BJ (cell line): ENCODE measurements at regions of chr19 and their contacts with region 1.

Region 1: DNA sequence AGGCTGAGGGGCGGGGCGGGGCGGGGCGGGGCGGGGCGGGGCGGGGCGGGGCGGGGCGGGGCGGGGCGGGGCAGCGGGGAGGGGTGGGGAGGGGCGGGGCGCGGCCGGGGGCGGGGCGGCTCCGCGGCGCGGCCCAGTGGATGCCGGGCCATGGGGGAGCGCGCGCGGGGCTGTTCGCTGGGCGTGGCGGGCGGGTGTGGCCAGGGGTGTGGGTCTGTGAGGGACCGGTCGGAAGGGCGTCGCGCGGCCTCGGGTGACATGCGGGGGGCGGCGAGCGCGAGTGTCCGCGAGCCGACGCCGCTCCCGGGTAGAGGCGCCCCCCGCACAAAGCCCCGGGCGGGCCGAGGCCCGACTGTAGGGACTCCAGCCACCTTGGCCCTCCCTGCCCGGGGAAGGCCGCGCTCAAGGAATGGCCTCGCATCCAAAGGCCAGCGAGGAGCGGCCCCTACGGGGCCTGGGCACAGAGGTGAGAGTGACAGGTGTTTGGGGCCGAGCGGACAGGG is at the start of gene ZFP28:
- DNase-seq: no peak
- H3K4me3 ChIP-seq: peak within 1 kb of the TSS; percentile 86
- H3K27me3 ChIP-seq: no peaks in the 10 kb centered on the region
- CTCF ChIP-seq: no peak
- polyA plus RNA-seq, gene ZFP28: 2.6 and 4.9 TPM in 2 replicates

Region 2: GRCh38 chr19:56477429-56478338 is 61.1 kb before region 1 on chr19:
- CTCF ChIA-PET with region 1: no interaction called
- POLR2A ChIA-PET with region 1: interaction called, 15 read pairs
- DNase-seq: peak; percentile 63
- H3K4me3 ChIP-seq: peak overlapping the region; percentile 82
- H3K27me3 ChIP-seq: no peaks in the 10 kb centered on the region
- CTCF ChIP-seq: no peak

Region 3: DNA sequence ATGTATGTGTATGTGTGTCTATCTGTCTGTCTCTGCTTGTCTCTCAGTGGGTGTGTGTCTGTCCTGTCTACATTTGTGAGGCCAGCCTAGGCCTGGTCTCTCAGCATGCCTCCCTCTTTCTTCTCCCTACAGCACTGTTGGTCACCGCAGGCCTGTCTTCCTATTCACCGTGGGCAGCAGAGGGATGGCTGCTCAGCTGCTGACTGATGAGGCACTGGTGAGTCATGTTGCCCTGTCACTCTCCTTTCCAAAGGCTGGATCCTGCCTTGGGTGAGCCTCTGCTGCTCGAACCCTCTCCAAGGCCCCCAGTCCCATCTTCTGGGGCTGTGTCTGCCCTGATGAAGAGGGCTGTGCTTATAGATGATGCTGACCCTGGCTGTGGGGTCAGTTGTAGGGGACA is 62.6 kb after region 1 on chr19:
- CTCF ChIA-PET with region 1: no interaction called
- POLR2A ChIA-PET with region 1: no interaction called
- DNase-seq: no peak
- H3K4me3 ChIP-seq: no peak overlapping the region
- H3K27me3 ChIP-seq: no peaks in the 10 kb centered on the region
- CTCF ChIP-seq: no peak